ENCODE measurements at regions of chr1 and their contacts with region 1.

Region 1: DNA sequence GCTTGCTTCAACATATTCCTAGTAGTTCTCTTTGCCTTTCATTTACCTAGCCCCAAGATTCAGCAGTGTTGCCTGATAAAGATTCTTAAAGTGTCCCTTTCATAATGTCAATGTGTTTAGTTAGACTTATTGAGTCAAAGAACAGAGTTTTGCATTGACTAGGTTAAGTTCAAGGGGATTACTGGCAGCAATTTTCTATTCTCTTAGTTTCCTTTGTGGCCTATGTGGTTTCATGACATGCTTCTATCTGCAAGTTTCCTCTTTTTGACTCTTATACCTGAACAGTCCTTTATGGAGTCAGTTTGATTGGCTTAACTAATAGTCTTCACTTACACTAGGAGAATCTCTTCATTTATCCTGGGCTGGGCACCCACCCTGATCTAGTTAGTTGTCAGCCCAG is 151.3 kb downstream of the ADGRL4 start:
- DNase-seq: no peak
- CTCF ChIP-seq: no peak

Region 2: GRCh38 chr1:78792756-78793155 is 62.5 kb before region 1 on chr1:
- CTCF ChIA-PET with region 1: no interaction called
- POLR2A ChIA-PET with region 1: no interaction called
- DNase-seq: no peak
- CTCF ChIP-seq: no peak

Region 3: GRCh38 chr1:78839704-78840277 is 15.5 kb before region 1 on chr1:
- CTCF ChIA-PET with region 1: interaction called, 10 read pairs
- POLR2A ChIA-PET with region 1: no interaction called
- DNase-seq: peak; percentile 28
- CTCF ChIP-seq: peak; percentile 56

Region 4: GRCh38 chr1:78869136-78869535 is 13.9 kb after region 1 on chr1:
- CTCF ChIA-PET with region 1: interaction called, 12 read pairs
- POLR2A ChIA-PET with region 1: no interaction called
- DNase-seq: no peak
- CTCF ChIP-seq: no peak

Region 5: GRCh38 chr1:78880223-78880622 is 25.0 kb after region 1 on chr1:
- CTCF ChIA-PET with region 1: no interaction called
- POLR2A ChIA-PET with region 1: no interaction called
- DNase-seq: no peak
- CTCF ChIP-seq: no peak

Region 6: GRCh38 chr1:79079770-79080169 is 224.5 kb after region 1 on chr1:
- CTCF ChIA-PET with region 1: no interaction called
- POLR2A ChIA-PET with region 1: no interaction called
- DNase-seq: no peak
- CTCF ChIP-seq: no peak

Measured in GM10248 (cell line).